Common myeloid progenitor, CD34-positive (primary cell): ENCODE measurements at regions of chr15 and their contacts with region 1.

Region 1: DNA sequence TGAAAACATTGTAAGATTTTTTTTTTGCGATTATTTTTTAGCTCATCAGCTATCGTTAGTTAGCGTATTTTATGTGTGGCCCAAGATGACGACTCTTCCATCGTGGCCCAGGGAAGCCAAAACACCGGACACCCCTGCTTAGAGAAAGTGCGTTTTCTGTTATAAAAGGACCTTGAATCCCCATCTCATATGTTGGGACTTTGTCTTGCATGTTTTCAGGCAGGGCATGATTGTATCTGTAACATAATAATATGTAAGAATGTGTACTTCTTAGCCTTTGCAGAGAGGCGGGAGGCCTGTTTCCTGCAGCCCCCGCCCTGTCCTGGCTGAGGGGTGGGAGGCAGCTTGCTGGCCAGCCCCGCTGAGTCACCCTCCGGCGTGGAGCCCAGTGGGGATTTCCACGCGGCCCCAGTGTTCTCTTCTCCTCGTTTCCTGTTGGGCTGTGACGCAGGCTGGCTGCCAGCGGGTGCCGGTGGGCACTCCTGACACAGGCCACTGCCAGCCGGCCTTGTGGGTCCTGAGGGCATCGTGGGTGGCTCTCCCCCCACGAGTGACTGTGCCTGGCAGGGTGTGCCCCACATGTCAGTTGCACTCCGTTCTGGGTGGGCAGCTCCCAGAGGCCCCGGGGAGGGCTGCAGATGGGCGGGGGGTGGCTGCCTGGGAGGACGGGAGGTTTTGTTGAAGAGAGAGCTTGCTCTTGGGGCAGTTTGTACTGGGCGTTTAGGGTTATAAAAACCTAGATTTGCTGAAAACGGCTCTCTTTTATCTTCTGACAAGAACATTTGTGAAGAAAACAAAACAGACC is 55.6 kb downstream of the SMAD3 start:
- DNase-seq: peak; percentile 92 to 99 (median 98)
- H3K4me3 ChIP-seq: peak overlapping the region in 3 of 7 experiments; percentile 28 to 57 (median 41)
- H3K27ac ChIP-seq: peak overlapping the region; percentile 88 to 93
- H3K4me1 ChIP-seq: peaks cover 12 to 77% (median 55%) of the 10 kb centered on the region in 4 experiments
- H3K27me3 ChIP-seq: no peaks in the 10 kb centered on the region

Region 2: DNA sequence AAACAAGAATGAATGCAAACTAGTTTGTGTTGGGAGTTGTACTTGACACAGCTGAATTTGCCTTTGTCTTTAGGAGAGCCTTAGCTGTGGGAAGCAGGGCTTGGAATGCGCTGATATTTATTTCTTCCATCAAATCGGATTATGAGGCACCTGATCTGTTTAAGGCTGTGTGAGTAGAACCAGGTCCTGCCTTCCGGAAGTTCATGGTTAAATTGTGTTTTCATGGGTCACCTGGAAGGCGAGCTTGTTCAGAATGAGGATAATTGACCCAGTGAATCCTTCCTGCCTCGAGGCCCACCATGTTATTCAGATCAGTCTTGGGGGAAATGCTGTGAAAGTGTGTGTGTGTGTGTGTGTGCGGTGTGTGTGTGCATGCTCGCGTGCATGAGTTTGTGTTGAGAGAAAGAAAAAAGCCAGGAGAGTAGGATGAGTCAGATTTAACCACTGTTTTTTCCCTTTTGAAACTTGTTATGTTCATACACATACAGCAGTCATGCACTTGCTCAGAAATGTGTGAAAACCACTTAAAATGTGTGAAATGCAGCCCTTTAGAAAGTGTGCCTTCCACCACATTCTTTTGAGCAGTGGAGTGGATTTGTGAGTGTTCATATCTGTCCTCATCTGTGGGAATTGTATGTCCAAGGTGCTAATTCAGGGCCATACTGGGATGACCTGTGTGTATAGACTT is 19.0 kb before region 1 on chr15:
- CTCF ChIA-PET with region 1: interaction called, 15 read pairs
- POLR2A ChIA-PET with region 1: interaction called, 12 read pairs
- DNase-seq: peak in 2 of 3 donors; percentile 75 to 82
- H3K4me3 ChIP-seq: peak overlapping the region in 2 of 7 experiments; percentile 5 to 61
- H3K27ac ChIP-seq: peak overlapping the region; percentile 65 to 77
- H3K4me1 ChIP-seq: peaks cover 45 to 99% (median 93%) of the 10 kb centered on the region in 4 experiments
- H3K27me3 ChIP-seq: no peaks in the 10 kb centered on the region

Region 3: GRCh38 chr15:67107014-67107812 is 13.8 kb before region 1 on chr15:
- CTCF ChIA-PET with region 1: interaction called, 15 read pairs
- POLR2A ChIA-PET with region 1: interaction called, 8 read pairs
- DNase-seq: peak in 2 of 3 donors; percentile 72 to 76
- H3K4me3 ChIP-seq: peak overlapping the region in 1 of 7 experiments; percentile 25
- H3K27ac ChIP-seq: no peak overlapping the region
- H3K4me1 ChIP-seq: peaks cover 31 to 89% (median 83%) of the 10 kb centered on the region in 4 experiments
- H3K27me3 ChIP-seq: no peaks in the 10 kb centered on the region